Upper lobe of right lung (tissue), 1 donor: ENCODE measurements at regions of chr22 and their contacts with region 1.

Region 1: DNA sequence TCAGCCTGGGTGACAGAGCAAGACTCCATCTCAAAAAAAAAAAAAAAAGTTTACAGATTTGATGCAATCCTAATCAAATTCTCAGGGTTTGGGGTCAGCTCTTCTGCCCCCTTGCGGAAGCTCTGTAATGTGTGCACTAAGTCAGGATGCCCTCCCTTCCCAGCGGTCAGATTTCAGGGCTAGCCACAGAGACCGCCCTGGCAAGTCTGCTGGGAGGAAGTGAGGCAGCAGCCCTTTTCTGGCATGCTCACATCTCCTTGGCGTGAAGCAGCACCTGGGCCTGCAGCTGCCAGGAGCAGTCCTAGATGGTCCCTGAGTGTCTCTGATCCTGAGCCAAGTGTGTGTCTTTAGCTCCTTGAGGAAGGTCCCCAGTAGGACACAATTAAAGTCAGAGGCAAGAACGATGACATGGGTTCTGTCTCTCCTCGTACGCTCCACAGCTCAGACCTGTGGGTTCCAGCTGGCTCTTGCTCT is 10.9 kb upstream of the APOBEC3C start:
- DNase-seq: peak; percentile 81
- ATAC-seq: peak; percentile 99
- H3K4me3 ChIP-seq: no peak overlapping the region
- H3K27ac ChIP-seq: no peak overlapping the region
- H3K4me1 ChIP-seq: peaks cover 9% of the 10 kb centered on the region
- H3K27me3 ChIP-seq: no peaks in the 10 kb centered on the region
- CTCF ChIP-seq: peak; percentile 82

Region 2: GRCh38 chr22:38872172-38872830 is 130.9 kb before region 1 on chr22 and contains the start of gene CBX6:
- intact Hi-C with region 1: loop called (anchors 10 kb)
- DNase-seq: peak; percentile 98
- ATAC-seq: peak; percentile 87
- H3K4me3 ChIP-seq: peak within 1 kb of the TSS; percentile 62
- H3K27ac ChIP-seq: peak within 1 kb of the TSS; percentile 96
- H3K4me1 ChIP-seq: peaks cover 33% of the 10 kb centered on the region
- H3K27me3 ChIP-seq: no peaks in the 10 kb centered on the region
- CTCF ChIP-seq: no peak
- total RNA-seq, gene CBX6: 61.6 TPM

Region 3: DNA sequence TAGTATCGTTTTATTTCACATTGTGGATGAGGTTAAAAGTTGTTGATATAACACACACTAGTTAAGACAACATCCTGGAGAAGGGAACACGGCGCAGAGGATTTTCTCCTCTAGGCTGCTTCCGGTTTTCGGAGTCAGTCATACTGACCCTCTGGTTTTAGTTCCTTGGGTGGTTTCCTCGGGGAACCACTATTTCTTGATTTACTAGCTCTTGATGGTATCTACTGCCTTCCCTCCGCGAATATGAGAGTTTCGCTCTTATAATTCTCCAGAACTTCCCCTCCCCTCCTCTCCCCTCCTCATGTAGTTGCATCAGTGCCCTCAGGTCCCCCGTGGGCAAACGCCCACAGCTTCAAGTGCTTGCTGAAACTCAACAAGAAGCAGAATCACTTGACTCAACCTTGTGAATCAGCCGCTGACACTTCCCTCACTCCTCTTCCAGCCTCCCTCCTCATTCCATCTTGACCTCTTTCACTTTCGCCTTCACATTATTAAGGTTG is 61.7 kb before region 1 on chr22:
- intact Hi-C with region 1: loop called (anchors 10 kb)
- DNase-seq: peak; percentile 80
- ATAC-seq: peak; percentile 90
- H3K4me3 ChIP-seq: no peak overlapping the region
- H3K27ac ChIP-seq: peak overlapping the region; percentile 30
- H3K4me1 ChIP-seq: peaks cover 15% of the 10 kb centered on the region
- H3K27me3 ChIP-seq: no peaks in the 10 kb centered on the region
- CTCF ChIP-seq: no peak